ENCODE measurements at regions of chr9 and their contacts with region 1.

Region 1: DNA sequence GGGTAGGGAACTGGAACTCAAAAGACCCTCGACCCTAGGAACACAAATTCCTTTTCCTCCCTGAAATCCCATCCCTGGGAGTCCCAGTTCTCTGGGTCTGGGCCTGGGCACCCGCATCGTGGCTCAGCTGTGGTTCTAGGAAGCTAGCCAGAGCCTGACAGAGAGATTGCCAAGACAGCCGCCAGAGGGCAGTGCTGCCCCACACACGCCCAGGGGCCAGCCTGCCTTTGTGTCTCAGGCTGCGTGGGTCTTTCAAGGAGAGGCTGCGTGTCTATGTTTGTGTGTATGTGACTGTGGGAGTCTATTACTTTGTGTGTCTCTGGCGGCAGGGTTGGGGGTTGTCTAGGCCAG is 32.0 kb upstream of the TTLL11 start:
- DNase-seq: peak; percentile 82 to 94 (median 90)
- H3K4me3 ChIP-seq: no peak overlapping the region
- H3K27ac ChIP-seq: peak overlapping the region in 43 of 59 donors; percentile 19 to 94 (median 79)
- H3K27me3 ChIP-seq: peaks cover 0 to 15% (median 0%) of the 10 kb centered on the region in 45 donors
- CTCF ChIP-seq: peak; percentile 89 to 100 (median 98)

Region 2: DNA sequence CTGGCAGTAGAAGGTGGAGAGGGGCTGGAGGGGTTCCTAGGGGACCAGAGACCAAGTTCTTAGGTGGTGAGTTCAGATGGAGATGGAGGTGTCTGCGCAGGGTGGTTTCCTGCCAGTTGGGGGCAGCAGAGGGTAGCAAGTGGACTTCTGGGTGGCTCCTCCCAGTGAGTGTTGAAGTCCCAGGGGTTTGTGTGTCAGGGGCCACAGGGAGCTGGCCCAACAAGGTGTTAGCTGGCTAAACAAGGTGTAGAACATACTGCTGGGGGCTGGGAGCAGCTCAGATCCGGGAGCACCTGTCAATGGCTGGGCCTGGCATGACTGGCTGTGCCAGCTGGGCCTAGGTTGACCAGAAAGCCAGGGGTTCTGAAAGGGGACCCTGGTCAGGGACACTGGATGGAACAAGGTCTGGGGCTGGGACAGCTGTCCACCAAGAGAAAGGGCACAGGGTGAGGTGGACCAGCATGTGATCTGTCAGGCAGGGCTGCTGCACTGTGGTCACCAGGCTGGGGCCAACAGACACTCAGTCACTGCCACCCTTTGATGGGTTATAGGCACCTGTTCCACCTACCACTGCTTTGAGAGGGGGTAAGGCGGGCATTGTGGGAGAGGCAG is 438.1 kb before region 1 on chr9:
- intact Hi-C with region 1: loop called in 1 of 2 experiments (anchors 2 kb)
- DNase-seq: peak; percentile 72 to 85 (median 78)
- H3K4me3 ChIP-seq: no peak overlapping the region
- H3K27ac ChIP-seq: peak overlapping the region in 13 of 59 donors; percentile 4 to 71 (median 32)
- H3K27me3 ChIP-seq: no peaks in the 10 kb centered on the region
- CTCF ChIP-seq: peak; percentile 39 to 96 (median 86)

Region 3: DNA sequence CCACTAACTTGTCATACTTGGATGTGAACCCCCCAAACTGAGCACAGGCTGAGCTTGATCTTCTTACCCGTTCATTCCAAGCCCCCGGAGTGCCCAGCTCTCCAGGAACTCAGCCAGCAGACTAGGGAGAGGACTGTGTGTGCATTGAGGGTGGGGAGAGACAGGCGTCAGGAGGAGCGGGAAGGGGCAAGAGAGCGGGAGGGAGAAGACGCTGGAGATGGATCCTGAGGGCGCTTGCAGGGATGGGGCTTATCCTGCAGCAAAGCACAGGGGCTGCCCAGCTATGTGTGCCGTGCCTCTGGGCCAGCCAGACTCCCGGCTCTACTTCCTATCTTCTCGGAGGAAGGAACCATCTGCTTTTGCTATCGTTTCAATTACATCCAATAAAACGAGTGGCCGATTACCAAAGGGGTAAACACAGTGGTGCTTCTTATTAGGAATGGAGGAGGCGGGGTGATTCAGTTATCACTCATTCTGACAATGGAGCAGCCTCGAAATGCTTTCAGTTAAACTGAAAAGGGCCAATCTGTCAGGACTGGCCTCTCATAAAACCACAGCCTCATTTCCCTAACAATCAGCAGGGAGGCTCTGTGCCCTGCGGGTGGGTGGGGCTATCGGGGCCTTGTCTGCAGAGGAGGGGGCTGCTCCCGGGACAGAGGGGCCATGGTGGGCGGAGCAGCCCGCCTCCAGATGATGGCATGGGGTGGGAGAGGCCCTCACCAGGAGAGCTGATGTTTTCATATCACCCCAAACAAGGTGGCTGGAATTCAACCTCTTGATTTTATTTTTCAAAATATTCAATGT is 305.5 kb before region 1 on chr9:
- intact Hi-C with region 1: no loop called
- DNase-seq: no peak
- H3K4me3 ChIP-seq: no peak overlapping the region
- H3K27ac ChIP-seq: peak overlapping the region in 5 of 59 donors; percentile 23 to 95 (median 48)
- H3K27me3 ChIP-seq: no peaks in the 10 kb centered on the region
- CTCF ChIP-seq: no peak

Region 4: DNA sequence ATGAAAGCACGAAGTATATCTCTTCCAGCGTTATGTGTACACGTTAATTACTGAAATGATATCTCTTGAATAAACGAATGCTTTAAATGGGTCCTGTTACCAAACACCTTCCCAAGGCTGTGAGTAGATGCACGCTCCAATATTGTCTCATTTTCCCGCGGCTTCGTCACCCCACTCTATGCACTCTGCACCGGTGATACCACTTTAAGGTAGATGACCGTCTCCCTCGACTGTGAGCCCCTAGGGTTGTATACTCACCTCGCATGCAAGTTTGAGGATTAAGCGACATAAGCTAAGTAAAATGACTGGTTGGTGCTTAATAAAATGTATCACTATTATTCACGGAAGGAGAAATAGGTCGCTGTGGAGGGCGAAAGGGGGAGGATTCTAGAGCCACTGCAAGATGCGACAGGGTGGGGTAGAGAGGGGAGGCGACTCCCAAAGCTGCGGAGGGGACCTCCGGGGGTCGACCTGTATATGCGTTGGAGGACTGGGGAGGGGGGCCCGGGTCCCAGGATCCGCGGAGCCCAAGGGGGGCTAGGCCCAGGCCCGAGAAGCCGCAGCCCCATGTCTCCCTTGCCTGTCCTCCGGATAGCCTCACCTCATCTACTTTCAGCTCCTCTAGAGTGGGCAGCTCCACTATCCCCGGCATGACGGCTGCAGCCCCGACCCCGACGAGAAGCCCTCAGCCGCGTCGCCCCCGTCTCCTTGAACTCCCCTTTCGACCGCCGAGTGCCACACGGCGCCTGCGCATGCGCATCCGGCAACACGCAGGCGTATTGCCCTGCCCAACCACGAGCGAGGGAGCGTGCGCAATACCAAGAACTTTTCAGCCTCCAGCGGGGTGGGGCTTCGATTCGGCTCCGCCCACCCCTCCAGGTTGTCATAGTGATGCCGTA is 34.1 kb after region 1 on chr9 and contains the starts of genes MORN5 and NDUFA8:
- intact Hi-C with region 1: loop called in 1 of 2 experiments (anchors 1 kb)
- DNase-seq: peak; percentile 81 to 95 (median 91)
- H3K4me3 ChIP-seq: peak within 1 kb of the TSS; percentile 49 to 100 (median 96)
- H3K27ac ChIP-seq: peak within 1 kb of the TSS in 55 of 59 donors; percentile 30 to 97 (median 87)
- H3K27me3 ChIP-seq: no peaks in the 10 kb centered on the region
- CTCF ChIP-seq: peak in 33 of 56 donors; percentile 6 to 54 (median 31)
- total RNA-seq, gene MORN5: 0.79 to 8.3 (median 3.3) TPM in 116 of 120 experiments, not detected in the others
- total RNA-seq, gene NDUFA8: 50.3 to 125 (median 89.3) TPM

Region 5: GRCh38 chr9:122200960-122201595 is 75.9 kb after region 1 on chr9:
- intact Hi-C with region 1: no loop called
- DNase-seq: no peak
- H3K4me3 ChIP-seq: no peak overlapping the region
- H3K27ac ChIP-seq: no peak overlapping the region
- H3K27me3 ChIP-seq: peaks cover 0 to 8% (median 0%) of the 10 kb centered on the region in 45 donors
- CTCF ChIP-seq: no peak

Region 6: DNA sequence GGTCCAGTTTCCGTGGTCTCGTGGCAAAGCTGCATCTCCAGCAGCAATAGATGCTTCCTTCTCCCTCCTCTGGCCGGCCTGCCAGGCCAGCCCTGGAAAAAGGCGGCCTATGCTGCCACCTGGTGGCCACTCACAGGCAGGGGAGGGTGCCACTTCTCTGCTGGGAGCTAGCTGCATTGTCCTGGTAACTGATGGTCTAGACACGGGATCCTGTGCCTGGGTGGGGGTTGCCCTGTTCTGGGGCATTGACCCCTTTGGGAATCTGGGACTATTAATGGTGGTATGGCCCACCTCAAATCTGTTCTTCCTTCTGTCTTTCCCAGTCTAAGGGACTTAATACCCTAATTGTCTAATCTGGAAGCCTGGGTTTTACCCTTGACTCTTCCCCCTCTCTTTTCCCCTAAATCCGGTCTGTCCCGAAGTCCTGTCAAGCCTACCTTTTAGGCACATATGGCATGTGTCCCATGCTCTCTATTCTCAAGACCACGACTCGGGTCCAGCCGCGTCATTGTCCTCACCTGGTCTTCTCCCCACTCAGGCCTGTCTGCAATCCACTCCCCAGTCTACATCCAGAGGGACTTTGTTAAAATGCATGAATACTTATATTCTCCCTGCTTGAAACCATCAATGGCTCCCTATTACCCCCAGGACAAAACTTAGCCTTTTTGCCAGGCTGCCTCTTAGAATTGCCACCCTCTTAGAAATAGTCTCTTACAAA is 225.7 kb after region 1 on chr9:
- intact Hi-C with region 1: loop called (anchors 1 kb)
- DNase-seq: peak; percentile 78 to 94 (median 86)
- H3K4me3 ChIP-seq: no peak overlapping the region
- H3K27ac ChIP-seq: peak overlapping the region in 5 of 59 donors; percentile 3 to 46 (median 22)
- H3K27me3 ChIP-seq: peaks cover 0 to 2% (median 0%) of the 10 kb centered on the region in 45 donors
- CTCF ChIP-seq: peak; percentile 96 to 100 (median 99)

Region 7: GRCh38 chr9:122464633-122465567 is 339.8 kb after region 1 on chr9:
- intact Hi-C with region 1: loop called in 1 of 2 experiments (anchors 10 kb)
- DNase-seq: peak; percentile 36 to 83 (median 69)
- H3K4me3 ChIP-seq: peak overlapping the region in 56 of 59 donors; percentile 18 to 67 (median 47)
- H3K27ac ChIP-seq: peak overlapping the region in 3 of 59 donors; percentile 3 to 64 (median 18)
- H3K27me3 ChIP-seq: no peaks in the 10 kb centered on the region
- CTCF ChIP-seq: peak; percentile 72 to 96 (median 89)